Activated CD4-positive, alpha-beta memory T cell treated with anti-CD3 and anti-CD28 coated beads for 36 hours (primary cell): ENCODE measurements at regions of chr11 and their contacts with region 1.

Region 1: GRCh38 chr11:118198370-118198769 is 21.9 kb upstream of the SCN2B start:
- DNase-seq: peak; percentile 89
- H3K4me3 Mint-ChIP-seq: peak overlapping the region; percentile 30
- H3K27ac Mint-ChIP-seq: peak overlapping the region; percentile 72
- H3K4me1 Mint-ChIP-seq: peaks cover 16% of the 10 kb centered on the region
- H3K27me3 Mint-ChIP-seq: no peaks in the 10 kb centered on the region

Region 2: DNA sequence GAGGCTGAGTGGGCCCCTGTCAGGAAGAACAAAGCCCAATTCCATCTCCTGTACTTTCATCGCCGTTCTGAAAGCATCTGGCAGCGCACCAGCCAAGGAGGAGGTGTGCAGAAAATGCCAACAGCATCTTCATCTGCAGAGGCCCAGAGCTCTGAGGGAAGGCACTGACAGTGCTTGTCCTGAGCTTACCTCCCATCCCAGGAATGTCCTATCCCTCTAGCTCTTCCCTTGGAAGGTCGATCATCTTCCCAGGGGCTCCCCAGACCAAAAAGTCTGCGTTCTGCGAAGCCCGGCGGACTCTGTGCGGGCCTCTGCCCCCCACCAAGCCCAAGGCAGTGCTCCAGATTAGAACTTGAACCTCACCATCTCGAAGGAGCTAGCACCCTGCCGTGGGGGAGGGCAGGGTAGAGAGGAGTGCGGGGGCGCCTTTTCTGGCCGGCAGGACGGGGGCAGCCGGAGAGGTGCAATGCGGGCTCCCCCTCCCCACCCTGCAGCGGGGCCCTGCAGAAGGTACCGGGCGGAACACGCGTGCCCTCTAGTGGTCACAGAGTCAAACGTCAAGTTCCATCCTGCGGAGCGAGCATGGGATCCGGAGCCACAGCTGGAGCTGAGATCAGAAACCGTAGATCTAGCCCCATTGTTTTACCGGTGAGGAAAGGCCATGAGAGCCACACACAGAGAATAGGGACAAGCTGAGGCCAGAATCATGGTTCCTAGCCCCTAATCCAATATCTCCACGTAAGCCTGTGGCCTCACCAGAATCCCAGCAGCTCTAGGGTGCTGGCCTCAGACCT is 26.9 kb before region 1 on chr11:
- CTCF ChIA-PET with region 1: interaction called, 16 read pairs
- POLR2A ChIA-PET with region 1: no interaction called
- intact Hi-C with region 1: no loop called
- DNase-seq: peak; percentile 81
- H3K4me3 Mint-ChIP-seq: no peak overlapping the region
- H3K27ac Mint-ChIP-seq: no peak overlapping the region
- H3K4me1 Mint-ChIP-seq: no peaks in the 10 kb centered on the region
- H3K27me3 Mint-ChIP-seq: peaks cover 9% of the 10 kb centered on the region

Region 3: DNA sequence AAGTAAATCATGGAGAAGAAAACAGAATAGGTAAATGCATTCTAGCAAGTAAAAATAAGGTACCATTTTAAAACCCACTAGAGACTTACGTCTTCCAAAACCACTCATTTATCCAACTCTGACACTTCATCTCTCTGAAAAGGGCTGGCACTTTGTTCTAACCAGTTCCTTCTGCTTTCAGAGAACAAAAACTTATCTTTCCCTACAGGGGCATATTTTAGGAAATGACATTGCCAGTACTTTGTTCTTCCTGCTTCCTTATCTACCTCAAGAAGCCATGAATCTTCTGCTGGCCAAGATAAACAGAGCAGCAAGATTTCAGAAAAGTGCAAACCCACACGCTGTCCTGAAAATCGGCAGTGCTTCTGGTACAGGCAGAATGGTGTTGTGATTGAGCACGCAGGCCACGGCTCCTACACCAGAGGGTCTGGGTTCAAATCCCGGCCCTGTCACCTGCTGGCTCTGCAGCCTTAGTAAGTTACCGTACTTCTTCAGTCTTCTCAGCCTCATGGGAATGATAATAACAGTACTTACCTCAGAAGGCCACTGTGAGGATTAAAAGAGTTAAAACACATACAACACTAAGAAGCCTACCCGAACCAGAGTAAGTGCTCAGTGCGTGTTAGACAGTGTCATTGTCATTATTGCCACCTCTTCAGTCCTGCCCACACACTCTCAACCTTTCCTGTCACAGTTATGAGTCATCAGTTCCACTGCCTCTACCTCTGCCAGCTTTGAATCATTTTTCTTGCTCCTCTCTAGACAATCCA is 42.8 kb after region 1 on chr11:
- CTCF ChIA-PET with region 1: interaction called, 26 read pairs
- POLR2A ChIA-PET with region 1: interaction called, 13 read pairs
- intact Hi-C with region 1: loop called (anchors 1 kb)
- DNase-seq: peak; percentile 84
- H3K4me3 Mint-ChIP-seq: peak overlapping the region; percentile 78
- H3K27ac Mint-ChIP-seq: peak overlapping the region; percentile 96
- H3K4me1 Mint-ChIP-seq: peaks cover 88% of the 10 kb centered on the region
- H3K27me3 Mint-ChIP-seq: no peaks in the 10 kb centered on the region

Region 4: DNA sequence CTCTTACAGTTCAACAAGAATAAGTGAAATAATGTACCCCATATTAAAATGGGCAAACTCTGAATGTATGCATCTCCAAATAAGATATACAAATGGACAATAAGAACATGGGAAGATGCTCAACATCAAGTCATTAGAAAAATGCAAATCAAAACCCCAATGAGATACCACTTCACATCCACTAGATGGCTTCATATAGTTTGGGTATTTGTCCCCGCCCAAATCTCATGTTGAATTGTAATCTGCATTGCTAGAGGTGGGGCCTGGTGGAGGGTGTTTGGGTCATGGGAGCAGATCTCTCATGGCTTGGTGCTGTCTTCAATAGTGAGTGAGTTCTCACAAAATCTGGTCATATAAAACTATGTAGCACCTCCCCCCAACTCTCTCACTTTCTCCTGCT is 60.0 kb after region 1 on chr11:
- CTCF ChIA-PET with region 1: interaction called, 23 read pairs
- POLR2A ChIA-PET with region 1: no interaction called
- intact Hi-C with region 1: no loop called
- DNase-seq: no peak
- H3K4me3 Mint-ChIP-seq: no peak overlapping the region
- H3K27ac Mint-ChIP-seq: no peak overlapping the region
- H3K4me1 Mint-ChIP-seq: peaks cover 22% of the 10 kb centered on the region
- H3K27me3 Mint-ChIP-seq: no peaks in the 10 kb centered on the region

Region 5: DNA sequence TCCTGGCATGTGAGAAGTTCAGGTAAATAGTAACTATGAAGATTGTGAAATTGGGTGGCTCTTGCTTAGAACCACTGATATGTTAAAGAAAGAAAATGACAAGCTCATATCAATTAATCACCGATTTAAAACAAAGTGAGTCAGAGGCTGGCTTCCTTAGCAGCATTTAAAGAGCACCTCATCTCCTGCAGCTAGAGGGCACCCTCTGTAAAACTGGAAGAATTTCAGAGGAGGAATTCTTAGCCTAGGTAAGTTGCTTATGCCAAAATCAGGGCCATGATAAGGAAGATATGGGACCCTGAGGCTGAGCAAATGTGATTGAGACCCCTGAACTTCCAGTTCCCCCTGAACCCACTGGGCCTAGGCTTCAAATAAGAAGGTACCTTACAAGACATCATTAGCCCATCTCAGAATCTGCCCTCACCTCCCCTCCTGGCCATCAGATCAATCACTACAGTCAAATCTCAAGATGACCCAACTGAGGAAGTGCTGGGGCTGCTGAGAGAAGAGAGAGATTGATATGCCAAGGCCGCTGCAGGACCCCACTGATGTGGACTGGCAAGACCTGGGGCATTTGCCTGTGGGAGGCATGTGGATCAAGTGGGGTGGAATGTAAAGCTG is 97.6 kb after region 1 on chr11:
- CTCF ChIA-PET with region 1: interaction called, 82 read pairs
- POLR2A ChIA-PET with region 1: interaction called, 6 read pairs
- intact Hi-C with region 1: loop called (anchors 1 kb)
- DNase-seq: peak; percentile 63
- H3K4me3 Mint-ChIP-seq: peak overlapping the region; percentile 22
- H3K27ac Mint-ChIP-seq: peak overlapping the region; percentile 61
- H3K4me1 Mint-ChIP-seq: peaks cover 17% of the 10 kb centered on the region
- H3K27me3 Mint-ChIP-seq: no peaks in the 10 kb centered on the region

Region 6: GRCh38 chr11:118353084-118353710 is 154.8 kb after region 1 on chr11:
- CTCF ChIA-PET with region 1: interaction called, 12 read pairs
- POLR2A ChIA-PET with region 1: no interaction called
- intact Hi-C with region 1: no loop called
- DNase-seq: no peak
- H3K4me3 Mint-ChIP-seq: no peak overlapping the region
- H3K27ac Mint-ChIP-seq: peak overlapping the region; percentile 71
- H3K4me1 Mint-ChIP-seq: peaks cover 23% of the 10 kb centered on the region
- H3K27me3 Mint-ChIP-seq: no peaks in the 10 kb centered on the region

Region 7: DNA sequence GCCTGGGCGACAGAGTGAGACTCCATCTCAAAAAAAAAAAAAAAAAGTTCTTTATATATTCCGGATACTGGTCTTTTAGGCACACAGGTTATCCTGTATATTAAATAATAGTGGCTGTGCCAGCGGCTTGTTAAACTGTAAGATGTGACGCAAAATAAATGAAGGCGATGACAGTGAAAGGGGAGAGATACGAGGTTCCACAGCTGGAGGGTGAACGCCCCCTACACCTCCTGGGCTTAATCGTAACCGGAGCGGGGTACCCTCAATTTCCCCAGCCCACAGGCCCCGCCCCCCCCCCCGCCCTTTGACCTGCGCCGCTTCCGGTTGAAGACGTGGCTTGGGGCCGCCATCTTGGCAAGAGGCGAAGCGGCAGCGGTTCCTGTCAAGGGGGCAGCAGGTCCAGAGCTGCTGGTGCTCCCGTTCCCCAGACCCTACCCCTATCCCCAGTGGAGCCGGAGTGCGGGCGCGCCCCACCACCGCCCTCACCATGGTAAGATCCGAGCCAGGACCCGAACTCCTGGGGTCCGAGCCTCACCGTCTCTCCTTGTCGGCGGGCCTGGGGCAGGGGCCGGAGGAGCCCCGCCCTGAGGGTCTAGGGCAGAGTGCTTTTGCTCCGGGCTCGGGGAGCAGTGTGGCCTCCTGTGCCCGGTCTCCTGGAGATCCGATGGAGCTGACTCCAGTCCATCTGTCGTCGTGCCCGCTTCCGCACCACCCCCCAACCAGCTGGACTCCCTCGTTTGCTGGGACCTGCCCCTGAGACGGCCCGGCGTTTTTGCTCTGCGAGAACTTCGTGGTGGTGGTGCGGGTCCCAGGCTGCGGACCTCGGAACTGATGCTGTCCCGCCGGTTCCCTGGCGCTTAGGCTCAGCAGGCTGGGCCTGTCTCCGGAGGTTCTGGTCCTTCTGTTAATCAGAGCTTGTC is 374.0 kb after region 1 on chr11 and contains the start of gene ARCN1:
- CTCF ChIA-PET with region 1: interaction called, 5 read pairs
- POLR2A ChIA-PET with region 1: no interaction called
- intact Hi-C with region 1: loop called (anchors 5 kb)
- DNase-seq: peak; percentile 87
- H3K4me3 Mint-ChIP-seq: peak within 1 kb of the TSS; percentile 87
- H3K27ac Mint-ChIP-seq: peak within 1 kb of the TSS; percentile 92
- H3K4me1 Mint-ChIP-seq: peaks cover 52% of the 10 kb centered on the region
- H3K27me3 Mint-ChIP-seq: no peaks in the 10 kb centered on the region
- total RNA-seq, gene ARCN1: 180 to 182 TPM